ENCODE measurements at regions of chr6 and their contacts with region 1.

Region 1: GRCh38 chr6:110221738-110222137 is 41.5 kb downstream of the CDC40 start:
- DNase-seq: no peak
- H3K4me3 Mint-ChIP-seq: no peak overlapping the region
- H3K27ac Mint-ChIP-seq: no peak overlapping the region
- H3K4me1 Mint-ChIP-seq: no peaks in the 10 kb centered on the region
- H3K27me3 Mint-ChIP-seq: no peaks in the 10 kb centered on the region

Region 2: DNA sequence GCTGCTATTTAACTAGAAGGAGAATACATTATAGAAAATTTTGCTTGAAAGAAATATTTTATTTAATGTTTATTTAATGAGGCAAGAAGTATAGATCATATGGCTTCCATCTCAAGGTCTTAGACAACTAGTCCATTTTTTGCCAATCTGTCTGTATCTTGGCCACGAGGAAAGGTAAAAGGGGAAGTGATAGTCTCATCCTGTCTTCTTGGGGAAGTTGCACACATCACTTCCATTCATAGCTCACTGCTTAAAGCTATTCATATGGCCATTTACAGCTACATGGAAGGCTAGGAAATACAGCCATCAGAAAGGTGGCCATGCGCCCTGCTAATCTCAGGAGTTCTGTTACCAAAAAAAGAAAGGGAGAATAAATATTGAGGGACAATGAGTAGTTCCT is 85.6 kb after region 1 on chr6:
- intact Hi-C with region 1: no loop called
- DNase-seq: no peak
- H3K4me3 Mint-ChIP-seq: no peak overlapping the region
- H3K27ac Mint-ChIP-seq: no peak overlapping the region
- H3K4me1 Mint-ChIP-seq: no peaks in the 10 kb centered on the region
- H3K27me3 Mint-ChIP-seq: peaks cover 10% of the 10 kb centered on the region

Region 3: GRCh38 chr6:110325197-110325596 is 103.5 kb after region 1 on chr6:
- intact Hi-C with region 1: no loop called
- DNase-seq: no peak
- H3K4me3 Mint-ChIP-seq: no peak overlapping the region
- H3K27ac Mint-ChIP-seq: no peak overlapping the region
- H3K4me1 Mint-ChIP-seq: no peaks in the 10 kb centered on the region
- H3K27me3 Mint-ChIP-seq: peaks cover under 1% of the 10 kb centered on the region

Region 4: GRCh38 chr6:110664933-110665332 is 443.2 kb after region 1 on chr6:
- intact Hi-C with region 1: loop called (anchors 5 kb)
- DNase-seq: no peak
- H3K4me3 Mint-ChIP-seq: no peak overlapping the region
- H3K27ac Mint-ChIP-seq: no peak overlapping the region
- H3K4me1 Mint-ChIP-seq: peaks cover 12% of the 10 kb centered on the region
- H3K27me3 Mint-ChIP-seq: no peaks in the 10 kb centered on the region